Activated naive CD4-positive, alpha-beta T cell treated with anti-CD3 and anti-CD28 coated beads, Interleukin-2, amount 10 ng/mL, durations not matched to agents 7 days and 5 days (primary cell): ENCODE measurements at regions of chr9 and their contacts with region 1.

Region 1: DNA sequence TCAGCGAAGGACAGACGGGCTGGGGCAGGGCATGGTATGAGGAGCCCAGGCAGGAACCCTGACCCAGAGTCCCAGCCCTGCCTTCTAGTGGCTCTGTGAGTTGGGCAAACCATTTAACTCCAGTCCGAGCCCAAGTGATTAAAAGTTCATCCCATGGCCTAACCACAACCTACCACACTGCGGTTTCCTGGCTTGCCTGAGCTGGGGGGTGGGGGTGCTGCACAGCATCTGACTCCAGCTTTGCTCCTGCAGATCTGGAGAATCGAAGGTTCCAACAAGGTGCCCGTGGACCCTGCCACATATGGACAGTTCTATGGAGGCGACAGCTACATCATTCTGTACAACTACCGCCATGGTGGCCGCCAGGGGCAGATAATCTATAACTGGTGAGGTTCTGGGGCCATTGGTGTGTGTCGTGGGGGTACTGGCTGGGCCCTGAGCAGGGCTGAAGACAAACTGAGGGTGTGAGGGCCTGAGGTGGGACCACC is 49.0 kb downstream of the STOM start:
- DNase-seq: peak; percentile 52
- H3K4me3 Mint-ChIP-seq: no peak overlapping the region
- H3K27ac Mint-ChIP-seq: no peak overlapping the region
- H3K4me1 Mint-ChIP-seq: peaks cover 28% of the 10 kb centered on the region
- H3K27me3 Mint-ChIP-seq: no peaks in the 10 kb centered on the region

Region 2: DNA sequence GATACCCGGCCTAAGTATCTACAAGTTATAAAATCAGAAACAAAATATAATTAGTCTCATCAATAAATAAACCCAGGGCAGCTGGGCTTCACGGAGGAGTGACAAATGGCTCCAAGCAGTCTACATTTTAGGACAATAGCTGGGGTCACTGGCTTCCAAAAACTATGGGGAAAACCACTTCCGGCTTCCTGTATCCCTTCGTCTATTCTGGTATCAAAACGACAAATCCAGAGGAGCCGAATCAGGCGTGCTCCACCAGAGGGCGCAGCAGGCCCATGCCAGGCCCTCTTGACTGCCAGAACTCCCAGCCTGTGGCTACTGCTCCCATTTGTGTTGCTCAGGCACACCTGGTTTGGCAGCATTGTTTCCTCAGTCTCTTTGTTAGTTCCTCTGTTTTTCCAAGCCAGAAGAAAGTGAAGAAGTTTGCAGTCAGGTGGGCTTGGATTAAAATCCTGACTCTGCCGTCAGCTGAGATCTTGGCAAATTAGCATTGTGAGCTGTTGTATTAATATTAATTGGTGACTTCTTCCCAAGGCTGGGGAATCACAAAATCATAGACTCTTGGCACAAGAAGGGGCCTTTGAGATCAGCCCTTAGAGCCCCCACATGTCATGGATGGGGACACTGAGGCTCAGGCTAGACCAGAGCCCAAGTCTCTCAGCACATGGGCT is 107.8 kb before region 1 on chr9:
- CTCF ChIA-PET with region 1: interaction called, 46 read pairs
- DNase-seq: peak; percentile 79
- H3K4me3 Mint-ChIP-seq: no peak overlapping the region
- H3K27ac Mint-ChIP-seq: no peak overlapping the region
- H3K4me1 Mint-ChIP-seq: peaks cover 14% of the 10 kb centered on the region
- H3K27me3 Mint-ChIP-seq: no peaks in the 10 kb centered on the region

Region 3: DNA sequence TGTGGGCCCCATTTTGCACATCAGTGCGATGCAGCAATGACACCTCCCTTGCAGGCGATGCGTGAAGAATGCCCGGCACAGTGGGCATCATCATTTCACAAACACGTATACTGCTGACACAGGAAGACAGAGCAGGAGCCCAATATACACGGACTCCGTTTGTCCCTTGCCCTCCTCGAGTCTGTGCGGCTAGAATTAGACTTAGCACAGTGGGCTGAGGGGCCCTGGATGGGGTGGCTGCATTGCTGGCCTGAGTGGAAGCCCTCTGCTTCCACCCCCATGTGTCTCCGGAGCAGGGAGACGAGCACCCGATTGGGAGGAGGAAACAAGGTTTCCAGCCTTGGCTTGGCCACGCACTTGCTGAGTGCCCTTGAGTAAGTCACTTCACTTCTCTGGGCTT is 12.3 kb before region 1 on chr9:
- CTCF ChIA-PET with region 1: interaction called, 15 read pairs
- DNase-seq: no peak
- H3K4me3 Mint-ChIP-seq: no peak overlapping the region
- H3K27ac Mint-ChIP-seq: no peak overlapping the region
- H3K4me1 Mint-ChIP-seq: no peaks in the 10 kb centered on the region
- H3K27me3 Mint-ChIP-seq: peaks cover 3% of the 10 kb centered on the region

Region 4: GRCh38 chr9:121349009-121349408 is 27.9 kb after region 1 on chr9:
- CTCF ChIA-PET with region 1: interaction called, 14 read pairs
- DNase-seq: no peak
- H3K4me3 Mint-ChIP-seq: no peak overlapping the region
- H3K27ac Mint-ChIP-seq: no peak overlapping the region
- H3K4me1 Mint-ChIP-seq: peaks cover 12% of the 10 kb centered on the region
- H3K27me3 Mint-ChIP-seq: no peaks in the 10 kb centered on the region

Region 5: GRCh38 chr9:121376214-121376830 is 55.3 kb after region 1 on chr9:
- CTCF ChIA-PET with region 1: interaction called, 74 read pairs
- DNase-seq: no peak
- H3K4me3 Mint-ChIP-seq: no peak overlapping the region
- H3K27ac Mint-ChIP-seq: no peak overlapping the region
- H3K4me1 Mint-ChIP-seq: peaks cover 3% of the 10 kb centered on the region
- H3K27me3 Mint-ChIP-seq: peaks cover 4% of the 10 kb centered on the region